A549 (cell line): ENCODE measurements at regions of chr1 and their contacts with region 1.

Region 1: DNA sequence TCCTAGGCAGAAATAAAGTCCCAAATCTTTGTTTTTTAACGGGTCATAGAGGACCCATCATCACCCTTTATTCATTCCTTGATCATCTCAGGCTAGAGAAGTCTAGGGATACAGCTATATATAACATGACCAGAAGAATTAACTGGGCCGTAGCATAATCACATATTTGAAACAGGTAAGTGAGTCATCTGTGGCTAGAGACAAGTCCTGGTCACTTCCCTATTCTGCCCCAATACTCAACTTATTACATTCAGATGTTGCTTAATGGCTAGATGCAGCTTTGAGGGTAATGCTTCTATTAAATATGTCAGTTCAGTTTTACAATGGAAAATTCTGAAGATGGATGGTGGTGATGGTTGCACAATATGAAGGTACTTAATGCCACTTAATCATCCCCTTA is 47.0 kb downstream of the EXO1 start:
- DNase-seq: no peak
- ATAC-seq: no peak
- H3K4me3 ChIP-seq: no peak overlapping the region
- H3K27ac ChIP-seq: no peak overlapping the region
- H3K4me1 ChIP-seq: no peaks in the 10 kb centered on the region
- CTCF ChIP-seq: no peak
- EP300 ChIP-seq: no peak
- POLR2A ChIP-seq: no peak
- RAD21 ChIP-seq: no peak

Region 2: GRCh38 chr1:241916196-241916595 is 21.2 kb after region 1 on chr1:
- CTCF ChIA-PET with region 1: interaction called, 10 read pairs
- POLR2A ChIA-PET with region 1: no interaction called
- DNase-seq: no peak
- ATAC-seq: no peak
- H3K4me3 ChIP-seq: no peak overlapping the region
- H3K27ac ChIP-seq: no peak overlapping the region
- H3K4me1 ChIP-seq: no peaks in the 10 kb centered on the region
- CTCF ChIP-seq: no peak
- EP300 ChIP-seq: no peak
- POLR2A ChIP-seq: no peak
- RAD21 ChIP-seq: no peak

Region 3: GRCh38 chr1:241985787-241986186 is 90.8 kb after region 1 on chr1:
- CTCF ChIA-PET with region 1: interaction called, 80 read pairs
- POLR2A ChIA-PET with region 1: no interaction called
- DNase-seq: peak; percentile 62 to 76
- ATAC-seq: peak; percentile 75 to 80; a peak in 5 of 6 replicates
- H3K4me3 ChIP-seq: no peak overlapping the region
- H3K27ac ChIP-seq: no peak overlapping the region
- H3K4me1 ChIP-seq: peaks cover 19% of the 10 kb centered on the region; the same call in 2 of the 3 replicates
- CTCF ChIP-seq: peak; percentile 55
- EP300 ChIP-seq: no peak
- POLR2A ChIP-seq: no peak
- RAD21 ChIP-seq: peak; percentile 47 to 62; a peak in 4 of 5 replicates

Region 4: DNA sequence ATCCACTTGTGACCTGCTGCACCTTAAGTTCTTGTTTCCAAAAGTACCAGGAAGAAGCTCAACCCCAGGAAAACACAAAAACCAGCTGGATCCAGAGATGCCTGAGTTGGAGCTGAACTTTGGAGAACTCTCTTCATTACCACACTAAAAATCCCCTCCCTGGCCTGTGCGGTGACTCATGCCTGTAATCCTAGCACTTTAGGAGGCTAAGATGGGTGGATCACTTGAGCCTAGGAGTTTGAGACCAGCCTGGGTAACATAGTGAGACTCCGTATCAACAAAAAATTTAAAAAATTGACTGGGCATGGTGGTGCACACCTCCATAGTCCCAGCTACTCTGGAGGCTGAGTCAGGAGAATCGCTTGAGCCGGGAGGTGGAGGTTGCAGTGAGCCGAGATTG is 97.7 kb after region 1 on chr1:
- CTCF ChIA-PET with region 1: interaction called, 106 read pairs
- POLR2A ChIA-PET with region 1: no interaction called
- DNase-seq: no peak
- ATAC-seq: no peak
- H3K4me3 ChIP-seq: no peak overlapping the region
- H3K27ac ChIP-seq: no peak overlapping the region
- H3K4me1 ChIP-seq: peaks cover 22% of the 10 kb centered on the region; the same call in 2 of the 3 replicates
- CTCF ChIP-seq: no peak
- EP300 ChIP-seq: no peak
- POLR2A ChIP-seq: no peak
- RAD21 ChIP-seq: no peak

Region 5: GRCh38 chr1:242017584-242018233 is 122.7 kb after region 1 on chr1:
- CTCF ChIA-PET with region 1: interaction called, 13 read pairs
- POLR2A ChIA-PET with region 1: no interaction called
- DNase-seq: peak; percentile 69 to 72
- ATAC-seq: peak; percentile 68 to 74; a peak in 4 of 6 replicates
- H3K4me3 ChIP-seq: no peak overlapping the region
- H3K27ac ChIP-seq: no peak overlapping the region
- H3K4me1 ChIP-seq: peaks cover 8% of the 10 kb centered on the region; the same call in 2 of the 3 replicates
- CTCF ChIP-seq: peak; percentile 66
- EP300 ChIP-seq: no peak
- POLR2A ChIP-seq: no peak
- RAD21 ChIP-seq: peak; percentile 64 to 73